Naive thymus-derived CD4-positive, alpha-beta T cell (primary cell): ENCODE measurements at regions of chrX and their contacts with region 1.

Region 1: DNA sequence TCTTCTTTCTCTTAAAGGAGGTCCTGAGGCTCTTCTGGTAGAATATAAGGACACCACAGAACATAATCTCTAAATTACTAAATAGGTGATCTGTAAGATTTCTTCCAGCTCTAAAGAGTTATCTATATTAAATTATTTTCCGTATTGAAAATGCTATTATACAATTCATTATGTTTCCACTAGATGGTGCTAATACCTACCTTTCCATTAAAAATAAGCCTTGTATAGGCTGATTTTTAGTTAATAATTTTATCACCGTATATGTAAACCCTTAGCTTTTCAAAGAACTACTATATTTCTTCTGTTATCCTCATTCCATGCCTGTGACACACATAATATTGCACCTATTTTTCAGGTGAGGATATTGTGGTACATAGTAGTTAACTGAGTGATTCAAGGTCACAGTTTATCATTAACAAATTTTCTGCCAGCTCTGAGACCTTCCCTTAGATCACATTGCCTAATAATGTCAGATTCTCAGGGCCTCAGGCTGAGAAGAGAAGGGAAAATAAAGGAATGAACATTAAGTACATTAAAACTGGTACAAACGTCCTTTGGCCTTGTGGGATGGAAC is 138.8 kb downstream of the TEX11 start:
- DNase-seq: peak in 1 of 9 donors; percentile 0
- ATAC-seq: no peak
- H3K4me3 ChIP-seq: no peak overlapping the region
- H3K4me3 Mint-ChIP-seq: no peak overlapping the region
- H3K27ac ChIP-seq: no peak overlapping the region
- H3K27ac Mint-ChIP-seq: no peak overlapping the region
- H3K4me1 ChIP-seq: no peaks in the 10 kb centered on the region
- H3K4me1 Mint-ChIP-seq: no peaks in the 10 kb centered on the region
- H3K27me3 ChIP-seq: no peaks in the 10 kb centered on the region
- H3K27me3 Mint-ChIP-seq: peaks cover 0 to 6% (median 0%) of the 10 kb centered on the region in 5 donors

Region 2: DNA sequence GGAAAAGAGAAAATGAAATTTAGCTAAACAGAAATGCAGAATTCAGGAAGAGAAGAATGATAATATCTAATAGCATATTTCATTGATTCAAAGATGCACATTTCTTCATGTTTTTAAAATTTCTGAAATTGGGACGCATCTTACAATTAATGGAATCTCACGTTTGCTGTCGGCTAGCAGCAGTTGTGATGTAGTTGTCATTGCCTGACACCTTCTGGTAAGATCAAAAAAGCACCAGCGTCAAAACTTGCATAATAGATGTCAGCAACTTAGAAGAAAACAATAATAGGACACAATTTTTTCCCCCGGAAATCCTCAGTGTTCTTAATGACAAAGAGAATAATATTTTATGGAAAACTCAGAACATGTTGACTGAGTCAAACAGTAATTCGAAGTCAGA is 191.0 kb after region 1 on chrX:
- CTCF ChIA-PET with region 1: no interaction called
- POLR2A ChIA-PET with region 1: no interaction called
- intact Hi-C with region 1: loop called in 1 of 2 experiments (anchors 10 kb)
- DNase-seq: no peak
- ATAC-seq: no peak
- H3K4me3 ChIP-seq: no peak overlapping the region
- H3K4me3 Mint-ChIP-seq: no peak overlapping the region
- H3K27ac ChIP-seq: no peak overlapping the region
- H3K27ac Mint-ChIP-seq: no peak overlapping the region
- H3K4me1 ChIP-seq: no peaks in the 10 kb centered on the region
- H3K4me1 Mint-ChIP-seq: peaks cover 0 to 6% (median 0%) of the 10 kb centered on the region in 7 donors
- H3K27me3 ChIP-seq: no peaks in the 10 kb centered on the region
- H3K27me3 Mint-ChIP-seq: peaks cover 0 to 27% (median 0%) of the 10 kb centered on the region in 5 donors

Region 3: DNA sequence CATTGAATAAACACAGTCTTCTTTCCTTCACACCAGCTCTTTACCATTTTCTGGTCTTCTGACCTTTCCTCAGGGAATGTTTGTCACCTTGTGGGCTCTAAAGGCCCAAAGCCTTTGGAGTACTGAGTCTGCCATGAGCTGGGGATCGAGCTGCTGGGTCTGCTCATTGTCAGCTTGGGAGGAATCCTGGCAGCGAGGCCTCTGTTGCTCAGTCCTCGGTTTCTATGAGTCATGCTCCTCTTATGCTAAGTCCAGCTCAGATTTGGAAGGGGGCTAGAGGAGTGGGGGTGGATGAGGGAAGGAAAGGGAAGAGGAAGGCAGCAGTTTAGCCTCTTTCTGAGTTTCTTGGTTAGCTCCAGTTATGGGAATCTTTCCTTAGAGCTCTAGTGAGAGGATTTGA is 1172.0 kb after region 1 on chrX:
- CTCF ChIA-PET with region 1: no interaction called
- POLR2A ChIA-PET with region 1: no interaction called
- intact Hi-C with region 1: no loop called
- DNase-seq: no peak
- ATAC-seq: no peak
- H3K4me3 ChIP-seq: no peak overlapping the region
- H3K4me3 Mint-ChIP-seq: no peak overlapping the region
- H3K27ac ChIP-seq: no peak overlapping the region
- H3K27ac Mint-ChIP-seq: no peak overlapping the region
- H3K4me1 ChIP-seq: no peaks in the 10 kb centered on the region
- H3K4me1 Mint-ChIP-seq: no peaks in the 10 kb centered on the region
- H3K27me3 ChIP-seq: no peaks in the 10 kb centered on the region
- H3K27me3 Mint-ChIP-seq: peaks cover 0 to 5% (median 0%) of the 10 kb centered on the region in 5 donors